Activated naive CD4-positive, alpha-beta T cell treated with anti-CD3 and anti-CD28 coated beads, Interleukin-2, amount 10 ng/mL, durations not matched to agents 7 days and 5 days (primary cell): ENCODE measurements at regions of chr3 and their contacts with region 1.

Region 1: GRCh38 chr3:124559881-124560574 is 170.2 kb upstream of the UMPS start:
- DNase-seq: peak; percentile 79
- H3K4me3 Mint-ChIP-seq: no peak overlapping the region
- H3K27ac Mint-ChIP-seq: no peak overlapping the region
- H3K4me1 Mint-ChIP-seq: no peaks in the 10 kb centered on the region
- H3K27me3 Mint-ChIP-seq: peaks cover 68% of the 10 kb centered on the region

Region 2: GRCh38 chr3:124576565-124577493 is 16.8 kb after region 1 on chr3:
- CTCF ChIA-PET with region 1: interaction called, 10 read pairs
- DNase-seq: no peak
- H3K4me3 Mint-ChIP-seq: no peak overlapping the region
- H3K27ac Mint-ChIP-seq: no peak overlapping the region
- H3K4me1 Mint-ChIP-seq: peaks cover 18% of the 10 kb centered on the region
- H3K27me3 Mint-ChIP-seq: peaks cover 31% of the 10 kb centered on the region

Region 3: DNA sequence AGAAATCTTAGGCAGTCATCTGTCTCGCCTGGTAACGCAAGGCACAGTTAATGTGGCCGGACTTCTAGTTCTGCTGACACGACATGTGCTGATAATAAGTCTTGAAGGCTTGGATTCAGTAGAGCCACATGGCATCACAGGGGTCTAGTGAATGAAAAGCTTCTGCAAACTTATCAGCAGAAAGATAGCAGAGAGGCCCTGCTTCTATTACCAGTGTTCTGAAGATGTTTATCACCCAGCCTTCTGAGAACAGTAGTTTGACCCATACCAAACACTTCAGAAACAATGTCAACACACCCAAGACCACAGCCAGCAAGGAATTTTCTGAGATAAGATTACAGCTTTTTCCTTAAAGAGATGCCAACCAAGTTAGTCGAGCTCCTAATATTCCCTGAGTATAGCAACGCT is 67.5 kb after region 1 on chr3:
- CTCF ChIA-PET with region 1: no interaction called
- DNase-seq: no peak
- H3K4me3 Mint-ChIP-seq: no peak overlapping the region
- H3K27ac Mint-ChIP-seq: no peak overlapping the region
- H3K4me1 Mint-ChIP-seq: peaks cover 5% of the 10 kb centered on the region
- H3K27me3 Mint-ChIP-seq: peaks cover 38% of the 10 kb centered on the region